Activated CD4-positive, alpha-beta memory T cell treated with anti-CD3 and anti-CD28 coated beads for 36 hours (primary cell): ENCODE measurements at regions of chr22 and their contacts with region 1.

Region 1: GRCh38 chr22:49930739-49931412 is 12.4 kb downstream of the CRELD2 start:
- DNase-seq: peak; percentile 77
- H3K4me3 Mint-ChIP-seq: peak overlapping the region; percentile 6
- H3K27ac Mint-ChIP-seq: peak overlapping the region; percentile 66
- H3K4me1 Mint-ChIP-seq: peaks cover 40% of the 10 kb centered on the region
- H3K27me3 Mint-ChIP-seq: no peaks in the 10 kb centered on the region

Region 2: DNA sequence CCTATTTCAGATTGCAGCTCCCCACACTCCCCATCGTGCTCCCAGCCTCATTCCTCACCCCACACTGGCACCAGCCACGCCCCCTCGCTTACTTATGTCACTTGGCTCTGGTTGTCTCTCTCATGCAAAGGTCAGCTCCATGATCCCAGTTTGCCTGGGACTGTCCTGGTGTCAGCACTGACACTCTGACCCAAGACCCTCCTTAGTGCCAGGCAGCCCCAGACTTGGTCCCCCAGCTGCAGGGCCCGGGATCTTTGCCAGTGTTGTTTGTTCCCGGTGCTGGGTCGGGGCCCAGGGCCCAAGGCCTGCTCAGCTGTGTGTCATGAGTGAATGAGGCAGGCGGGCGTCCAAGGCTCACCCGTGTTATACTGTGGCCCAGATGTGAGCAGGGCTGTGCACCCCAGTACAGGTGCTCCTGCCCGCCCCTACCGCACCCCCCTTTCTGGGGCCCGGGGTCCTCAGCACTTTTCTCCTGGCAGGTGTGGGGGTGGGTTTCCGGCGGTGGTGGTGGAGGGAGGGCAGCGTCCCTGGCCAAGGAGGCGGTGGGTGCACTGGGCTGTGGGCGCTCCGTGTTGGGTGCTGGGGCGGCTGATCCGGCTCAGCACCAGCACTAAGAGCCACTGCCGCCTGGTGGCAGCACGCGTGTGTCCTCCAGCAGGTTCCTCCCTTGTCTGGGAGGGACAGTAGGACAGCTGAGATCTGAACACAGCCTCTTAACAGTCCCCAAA is 62.2 kb after region 1 on chr22:
- CTCF ChIA-PET with region 1: interaction called, 18 read pairs
- POLR2A ChIA-PET with region 1: interaction called, 3 read pairs
- intact Hi-C with region 1: loop called (anchors 1 kb)
- DNase-seq: peak; percentile 83
- H3K4me3 Mint-ChIP-seq: no peak overlapping the region
- H3K27ac Mint-ChIP-seq: peak overlapping the region; percentile 6
- H3K4me1 Mint-ChIP-seq: peaks cover 4% of the 10 kb centered on the region
- H3K27me3 Mint-ChIP-seq: no peaks in the 10 kb centered on the region

Region 3: GRCh38 chr22:50012716-50013181 is 81.9 kb after region 1 on chr22 and contains the start of gene IL17REL:
- CTCF ChIA-PET with region 1: interaction called, 10 read pairs
- POLR2A ChIA-PET with region 1: interaction called, 8 read pairs
- intact Hi-C with region 1: no loop called
- DNase-seq: no peak
- H3K4me3 Mint-ChIP-seq: peak within 1 kb of the TSS; percentile 68
- H3K27ac Mint-ChIP-seq: peak within 1 kb of the TSS; percentile 62
- H3K4me1 Mint-ChIP-seq: peaks cover 18% of the 10 kb centered on the region
- H3K27me3 Mint-ChIP-seq: peaks cover 3% of the 10 kb centered on the region
- total RNA-seq, gene IL17REL: 0.73 to 1.1 TPM

Region 4: DNA sequence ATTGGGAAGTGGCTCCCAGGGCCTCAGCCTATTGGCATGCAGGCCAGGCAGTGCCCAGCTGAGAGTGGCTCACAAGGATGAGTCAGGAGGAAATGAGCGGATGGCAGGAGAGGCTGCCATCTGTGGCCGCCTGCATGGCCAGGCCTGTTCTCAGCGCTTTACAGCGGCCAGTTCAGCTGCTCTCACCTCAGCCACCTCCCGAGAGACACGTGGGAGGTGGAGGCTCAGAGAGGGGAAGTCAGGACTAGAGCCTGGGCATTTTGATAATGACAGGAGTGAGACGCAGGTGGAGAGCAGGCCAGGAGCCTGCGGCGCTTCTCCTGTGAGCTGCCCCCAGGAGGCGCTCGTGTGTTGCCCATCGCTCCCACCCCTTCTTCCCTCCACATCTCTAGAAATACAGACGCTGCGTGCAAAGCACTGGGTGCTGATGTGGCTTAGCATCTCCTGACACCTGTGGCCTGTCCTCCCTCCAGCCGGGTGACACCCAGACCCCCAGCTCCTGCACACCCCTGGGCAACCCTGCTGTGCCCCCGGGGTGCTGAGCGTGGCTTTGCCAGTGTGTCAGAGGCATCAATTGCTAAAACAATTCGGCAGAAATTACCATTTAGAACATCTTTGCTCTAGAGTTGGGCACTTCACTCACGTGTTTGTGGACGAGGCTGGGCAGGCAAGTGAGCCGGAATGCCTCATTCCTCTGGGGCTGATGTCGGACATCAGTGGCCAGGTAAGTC is 218.3 kb after region 1 on chr22:
- CTCF ChIA-PET with region 1: no interaction called
- POLR2A ChIA-PET with region 1: no interaction called
- intact Hi-C with region 1: loop called (anchors 5 kb)
- DNase-seq: peak; percentile 83
- H3K4me3 Mint-ChIP-seq: no peak overlapping the region
- H3K27ac Mint-ChIP-seq: peak overlapping the region; percentile 51
- H3K4me1 Mint-ChIP-seq: peaks cover 4% of the 10 kb centered on the region
- H3K27me3 Mint-ChIP-seq: peaks cover 2% of the 10 kb centered on the region